ENCODE measurements at regions of chr12 and their contacts with region 1.

Region 1: GRCh38 chr12:685388-685787 is 22.1 kb upstream of the NINJ2 start:
- DNase-seq: peak; percentile 70 to 96 (median 78)
- ATAC-seq: peak; percentile 92
- H3K4me3 ChIP-seq: peak overlapping the region; percentile 7
- H3K4me3 Mint-ChIP-seq: peak overlapping the region; percentile 39
- H3K27ac ChIP-seq: peak overlapping the region; percentile 75 to 93
- H3K27ac Mint-ChIP-seq: peak overlapping the region; percentile 91
- H3K4me1 ChIP-seq: peaks cover 27% of the 10 kb centered on the region
- H3K4me1 Mint-ChIP-seq: peaks cover 60% of the 10 kb centered on the region
- H3K27me3 ChIP-seq: no peaks in the 10 kb centered on the region
- H3K27me3 Mint-ChIP-seq: no peaks in the 10 kb centered on the region
- CTCF ChIP-seq: no peak

Region 2: GRCh38 chr12:642633-643474 is 42.5 kb before region 1 on chr12:
- CTCF ChIA-PET with region 1: interaction called, 3 read pairs
- POLR2A ChIA-PET with region 1: interaction called, 4 read pairs
- intact Hi-C with region 1: loop called (anchors 5 kb)
- DNase-seq: peak; percentile 49 to 92 (median 76)
- ATAC-seq: peak; percentile 74
- H3K4me3 ChIP-seq: peak overlapping the region; percentile 67
- H3K4me3 Mint-ChIP-seq: peak overlapping the region; percentile 84
- H3K27ac ChIP-seq: peak overlapping the region; percentile 84 to 85
- H3K27ac Mint-ChIP-seq: peak overlapping the region; percentile 93
- H3K4me1 ChIP-seq: peaks cover 63% of the 10 kb centered on the region
- H3K4me1 Mint-ChIP-seq: peaks cover 63% of the 10 kb centered on the region
- H3K27me3 ChIP-seq: no peaks in the 10 kb centered on the region
- H3K27me3 Mint-ChIP-seq: no peaks in the 10 kb centered on the region
- CTCF ChIP-seq: peak; percentile 15

Region 3: DNA sequence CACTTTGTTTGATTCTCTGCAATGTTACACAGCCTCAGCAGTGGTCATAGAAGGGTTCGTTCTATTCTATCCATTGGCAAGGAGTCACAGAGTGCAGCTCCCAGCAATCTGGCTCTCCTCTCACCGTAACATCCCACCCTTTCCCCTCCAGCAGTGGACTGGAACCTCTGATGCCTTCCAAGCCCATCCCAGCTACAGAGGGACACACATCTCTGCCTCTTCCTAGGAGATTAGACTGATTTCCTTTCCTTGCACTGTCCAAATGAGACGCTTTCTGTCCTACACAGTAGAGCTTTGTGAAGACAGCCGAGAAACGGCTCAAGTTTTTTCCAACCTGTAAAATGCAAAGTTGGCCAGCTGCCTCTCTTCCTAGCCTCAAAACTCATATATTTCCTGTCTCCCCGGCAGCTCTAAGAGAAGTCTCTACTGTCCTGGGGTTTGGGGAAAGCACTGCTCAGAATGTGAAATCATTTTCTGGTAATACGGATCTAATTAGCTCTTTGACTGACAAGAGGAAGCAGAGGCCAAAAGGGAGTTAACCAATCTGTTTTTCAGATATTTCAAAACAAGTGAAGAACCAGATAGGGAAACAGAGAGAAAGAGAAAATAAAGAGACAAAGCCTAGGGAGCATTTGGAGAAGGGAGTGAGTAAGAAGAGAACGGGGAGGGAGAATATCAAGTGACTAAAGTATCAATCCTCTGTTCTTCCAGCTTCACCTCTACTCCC is 22.7 kb before region 1 on chr12:
- CTCF ChIA-PET with region 1: interaction called, 3 read pairs
- POLR2A ChIA-PET with region 1: interaction called, 15 read pairs
- intact Hi-C with region 1: loop called in 1 of 2 experiments (anchors 1 kb)
- DNase-seq: peak in 1 of 14 experiments; percentile 25
- ATAC-seq: no peak
- H3K4me3 ChIP-seq: peak overlapping the region; percentile 1
- H3K4me3 Mint-ChIP-seq: peak overlapping the region; percentile 84
- H3K27ac ChIP-seq: no peak overlapping the region
- H3K27ac Mint-ChIP-seq: peak overlapping the region; percentile 63
- H3K4me1 ChIP-seq: peaks cover 67% of the 10 kb centered on the region
- H3K4me1 Mint-ChIP-seq: peaks cover 62% of the 10 kb centered on the region
- H3K27me3 ChIP-seq: no peaks in the 10 kb centered on the region
- H3K27me3 Mint-ChIP-seq: no peaks in the 10 kb centered on the region
- CTCF ChIP-seq: no peak

Region 4: DNA sequence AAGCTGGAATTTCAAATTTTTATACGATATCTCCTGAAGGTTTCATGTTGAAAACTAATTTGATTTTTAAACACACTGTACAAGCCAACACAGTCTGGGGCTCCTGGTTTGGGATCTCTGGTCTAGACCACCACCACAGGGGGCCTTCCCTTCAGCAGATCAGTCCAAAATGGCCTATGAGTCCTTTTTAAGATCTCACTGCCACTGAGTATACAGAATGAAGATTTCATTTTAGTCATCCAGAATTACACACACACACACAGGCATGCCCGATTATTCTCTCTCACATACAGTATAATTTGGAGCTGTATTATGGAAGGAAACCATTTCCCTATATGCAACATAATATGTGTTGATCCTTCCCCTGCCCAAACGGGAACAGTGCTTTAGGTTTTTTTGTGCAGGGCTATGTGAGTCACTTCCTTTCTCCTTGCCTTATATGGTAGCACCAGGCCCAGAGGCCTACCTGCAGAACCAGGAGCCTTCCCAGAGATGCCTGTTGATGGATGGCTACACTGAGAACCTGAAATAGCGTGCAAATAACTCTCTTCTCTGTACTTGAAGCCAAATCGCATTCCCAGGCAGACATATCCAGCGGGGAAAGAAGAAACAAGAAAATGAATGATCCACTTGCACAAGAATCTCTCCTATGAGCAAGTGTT is 38.9 kb after region 1 on chr12:
- CTCF ChIA-PET with region 1: no interaction called
- POLR2A ChIA-PET with region 1: interaction called, 8 read pairs
- intact Hi-C with region 1: loop called (anchors 5 kb)
- DNase-seq: peak in 7 of 14 experiments; percentile 5 to 63 (median 54)
- ATAC-seq: peak; percentile 55
- H3K4me3 ChIP-seq: no peak overlapping the region
- H3K4me3 Mint-ChIP-seq: no peak overlapping the region
- H3K27ac ChIP-seq: no peak overlapping the region
- H3K27ac Mint-ChIP-seq: peak overlapping the region; percentile 87
- H3K4me1 ChIP-seq: peaks cover 47% of the 10 kb centered on the region
- H3K4me1 Mint-ChIP-seq: peaks cover 89% of the 10 kb centered on the region
- H3K27me3 ChIP-seq: no peaks in the 10 kb centered on the region
- H3K27me3 Mint-ChIP-seq: no peaks in the 10 kb centered on the region
- CTCF ChIP-seq: no peak

Measured in CD4-positive, alpha-beta T cell (primary cell).